CD8-positive, alpha-beta T cell (primary cell): ENCODE measurements at regions of chr17 and their contacts with region 1.

Region 1: DNA sequence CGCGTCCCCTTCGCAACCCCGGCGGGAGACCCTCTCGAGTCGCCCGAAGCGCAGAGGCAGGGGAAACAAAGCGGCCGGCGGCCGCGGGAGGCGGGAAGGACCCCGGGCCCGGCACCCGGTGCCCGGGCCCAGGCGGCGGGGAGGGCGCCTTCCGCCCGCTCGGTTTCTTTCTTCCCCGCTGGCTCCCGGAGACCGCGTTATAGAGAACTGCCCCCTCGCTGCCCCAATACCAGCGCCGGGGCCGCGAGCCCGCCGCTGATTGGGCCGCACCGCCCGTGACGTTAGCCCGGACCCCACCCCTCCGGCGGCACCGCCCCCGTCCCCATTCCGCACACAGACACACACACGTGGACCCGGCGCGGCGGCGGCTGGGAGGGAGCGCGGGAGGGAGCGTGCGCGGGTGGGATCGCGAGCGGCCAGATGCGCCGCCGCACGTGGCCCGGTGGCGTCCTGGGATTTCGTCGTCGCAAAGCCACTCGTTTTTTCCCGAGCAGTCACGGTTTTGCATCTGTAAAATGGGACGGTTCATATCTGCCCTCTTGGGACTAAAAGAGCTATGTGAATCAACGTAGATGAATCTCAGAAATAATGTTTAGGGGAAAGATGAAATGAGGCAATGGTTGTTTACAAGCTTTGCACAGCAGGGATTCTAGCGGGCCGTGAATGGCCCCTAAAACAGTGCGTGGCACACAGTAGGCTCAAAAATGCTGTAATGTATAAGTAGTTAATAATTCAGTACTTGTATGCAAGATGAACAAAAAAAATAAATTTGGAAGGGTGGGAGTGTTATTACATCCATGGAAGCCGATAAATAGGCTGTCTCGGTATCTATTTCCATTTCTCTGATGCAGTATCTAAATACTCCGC is at the start of gene EPOP:
- DNase-seq: peak; percentile 51 to 91 (median 80)
- ATAC-seq: peak; percentile 80
- H3K4me3 ChIP-seq: peak within 1 kb of the TSS; percentile 34 to 58
- H3K4me3 Mint-ChIP-seq: peak within 1 kb of the TSS; percentile 75
- H3K27ac ChIP-seq: no peak within 1 kb of the TSS
- H3K27ac Mint-ChIP-seq: no peak within 1 kb of the TSS
- H3K4me1 ChIP-seq: peaks cover 17% of the 10 kb centered on the region
- H3K4me1 Mint-ChIP-seq: peaks cover 26% of the 10 kb centered on the region
- H3K27me3 ChIP-seq: peaks cover 4 to 14% of the 10 kb centered on the region in 2 experiments
- H3K27me3 Mint-ChIP-seq: peaks cover 28% of the 10 kb centered on the region
- CTCF ChIP-seq: no peak
- total RNA-seq, gene EPOP: 0.89 to 0.98 TPM

Region 2: DNA sequence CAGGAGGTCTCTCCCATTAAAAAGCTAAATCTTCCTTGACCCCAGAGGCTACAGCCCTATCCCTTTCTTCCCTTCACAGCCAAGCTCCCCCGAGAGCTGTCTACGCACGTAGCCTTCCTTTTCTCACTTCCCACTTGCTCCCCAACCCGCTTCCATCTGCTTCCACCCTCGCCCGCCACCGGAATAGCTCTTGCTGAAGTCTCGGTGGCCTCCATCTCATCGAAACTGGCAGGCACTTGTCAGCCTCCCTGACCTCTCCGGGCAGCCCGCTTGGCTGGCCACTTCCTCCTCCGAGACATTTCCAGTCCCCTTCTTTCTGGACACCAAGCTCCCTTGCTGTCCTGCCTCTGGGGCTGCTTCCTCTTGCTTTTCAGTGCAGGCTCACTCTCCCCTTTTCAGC is 10.5 kb after region 1 on chr17:
- CTCF ChIA-PET with region 1: interaction called, 16 read pairs
- POLR2A ChIA-PET with region 1: no interaction called
- intact Hi-C with region 1: no loop called
- DNase-seq: no peak
- ATAC-seq: no peak
- H3K4me3 ChIP-seq: no peak overlapping the region
- H3K4me3 Mint-ChIP-seq: no peak overlapping the region
- H3K27ac ChIP-seq: no peak overlapping the region
- H3K27ac Mint-ChIP-seq: no peak overlapping the region
- H3K4me1 ChIP-seq: no peaks in the 10 kb centered on the region
- H3K4me1 Mint-ChIP-seq: no peaks in the 10 kb centered on the region
- H3K27me3 ChIP-seq: no peaks in the 10 kb centered on the region
- H3K27me3 Mint-ChIP-seq: no peaks in the 10 kb centered on the region
- CTCF ChIP-seq: no peak

Region 3: DNA sequence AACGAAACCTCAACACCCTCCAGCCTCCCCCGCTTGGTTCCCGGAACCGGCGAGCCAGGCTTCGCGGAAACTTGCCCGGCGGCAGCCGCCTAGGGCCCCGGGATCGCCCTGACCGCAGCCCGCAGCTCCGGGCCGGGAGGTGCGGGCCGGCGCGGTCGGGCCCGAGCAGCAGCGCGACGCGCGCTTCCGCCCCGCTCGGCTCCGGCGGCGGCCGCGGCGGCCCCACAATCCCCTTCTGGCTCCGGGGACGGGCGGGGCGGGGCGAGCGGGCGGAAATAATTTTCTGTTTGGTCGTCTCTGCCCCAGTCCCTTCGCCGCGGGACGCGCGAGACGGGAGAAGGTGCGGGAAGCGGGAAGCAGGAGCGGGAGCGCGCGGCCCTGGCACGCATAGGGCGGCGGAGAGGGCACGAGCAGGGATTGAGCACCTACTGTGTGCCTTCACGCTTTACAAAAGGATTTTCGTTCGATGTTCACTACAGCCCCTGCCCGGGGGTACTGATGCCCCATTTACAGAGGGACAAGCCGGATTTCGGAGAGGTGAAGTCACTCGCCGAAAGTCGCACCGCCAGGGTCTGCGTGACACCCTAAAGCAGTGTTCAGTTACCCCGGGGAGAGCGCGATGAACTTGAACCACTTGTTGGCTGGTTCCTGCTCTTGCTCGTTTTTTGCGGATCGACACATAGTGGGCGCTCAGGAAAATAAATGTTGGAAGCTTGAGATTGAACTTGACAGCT is 27.4 kb after region 1 on chr17:
- CTCF ChIA-PET with region 1: interaction called, 19 read pairs
- POLR2A ChIA-PET with region 1: interaction called, 6 read pairs
- intact Hi-C with region 1: loop called (anchors 1 kb)
- DNase-seq: peak; percentile 58 to 91 (median 78)
- ATAC-seq: peak; percentile 27
- H3K4me3 ChIP-seq: peak overlapping the region; percentile 96 to 97
- H3K4me3 Mint-ChIP-seq: peak overlapping the region; percentile 99
- H3K27ac ChIP-seq: peak overlapping the region; percentile 70 to 94
- H3K27ac Mint-ChIP-seq: peak overlapping the region; percentile 97
- H3K4me1 ChIP-seq: peaks cover 33% of the 10 kb centered on the region
- H3K4me1 Mint-ChIP-seq: peaks cover 51% of the 10 kb centered on the region
- H3K27me3 ChIP-seq: no peaks in the 10 kb centered on the region
- H3K27me3 Mint-ChIP-seq: no peaks in the 10 kb centered on the region
- CTCF ChIP-seq: no peak

Region 4: GRCh38 chr17:38724337-38724988 is 49.5 kb after region 1 on chr17:
- CTCF ChIA-PET with region 1: interaction called, 20 read pairs
- POLR2A ChIA-PET with region 1: interaction called, 9 read pairs
- intact Hi-C with region 1: no loop called
- DNase-seq: peak in 2 of 9 experiments; percentile 45 to 47
- ATAC-seq: no peak
- H3K4me3 ChIP-seq: no peak overlapping the region
- H3K4me3 Mint-ChIP-seq: no peak overlapping the region
- H3K27ac ChIP-seq: peak overlapping the region in 1 of 2 experiments; percentile 71
- H3K27ac Mint-ChIP-seq: peak overlapping the region; percentile 77
- H3K4me1 ChIP-seq: peaks cover 57% of the 10 kb centered on the region
- H3K4me1 Mint-ChIP-seq: peaks cover 61% of the 10 kb centered on the region
- H3K27me3 ChIP-seq: no peaks in the 10 kb centered on the region
- H3K27me3 Mint-ChIP-seq: no peaks in the 10 kb centered on the region
- CTCF ChIP-seq: no peak

Region 5: GRCh38 chr17:39064374-39064773 is 389.4 kb after region 1 on chr17:
- CTCF ChIA-PET with region 1: no interaction called
- POLR2A ChIA-PET with region 1: no interaction called
- intact Hi-C with region 1: no loop called
- DNase-seq: no peak
- ATAC-seq: no peak
- H3K4me3 ChIP-seq: no peak overlapping the region
- H3K4me3 Mint-ChIP-seq: no peak overlapping the region
- H3K27ac ChIP-seq: no peak overlapping the region
- H3K27ac Mint-ChIP-seq: no peak overlapping the region
- H3K4me1 ChIP-seq: no peaks in the 10 kb centered on the region
- H3K4me1 Mint-ChIP-seq: peaks cover 15% of the 10 kb centered on the region
- H3K27me3 ChIP-seq: no peaks in the 10 kb centered on the region
- H3K27me3 Mint-ChIP-seq: no peaks in the 10 kb centered on the region
- CTCF ChIP-seq: no peak